ENCODE measurements at regions of chr3 and their contacts with region 1.

Region 1: GRCh38 chr3:101849051-101849720 is at the start of gene NFKBIZ:
- DNase-seq: peak; percentile 96
- H3K4me3 Mint-ChIP-seq: peak within 1 kb of the TSS; percentile 86
- H3K27ac Mint-ChIP-seq: peak within 1 kb of the TSS; percentile 97
- H3K4me1 Mint-ChIP-seq: peaks cover 45% of the 10 kb centered on the region
- H3K27me3 Mint-ChIP-seq: no peaks in the 10 kb centered on the region

Region 2: GRCh38 chr3:101827211-101828174 is 21.7 kb before region 1 on chr3:
- CTCF ChIA-PET with region 1: interaction called, 10 read pairs
- DNase-seq: peak; percentile 87
- H3K4me3 Mint-ChIP-seq: peak overlapping the region; percentile 82
- H3K27ac Mint-ChIP-seq: peak overlapping the region; percentile 92
- H3K4me1 Mint-ChIP-seq: peaks cover 46% of the 10 kb centered on the region
- H3K27me3 Mint-ChIP-seq: no peaks in the 10 kb centered on the region

Region 3: GRCh38 chr3:101873619-101874018 is 24.4 kb after region 1 on chr3:
- CTCF ChIA-PET with region 1: no interaction called
- DNase-seq: no peak
- H3K4me3 Mint-ChIP-seq: no peak overlapping the region
- H3K27ac Mint-ChIP-seq: no peak overlapping the region
- H3K4me1 Mint-ChIP-seq: no peaks in the 10 kb centered on the region
- H3K27me3 Mint-ChIP-seq: peaks cover 6% of the 10 kb centered on the region